Esophagus muscularis mucosa (tissue), 4 donors: ENCODE measurements at regions of chr3 and their contacts with region 1.

Region 1: GRCh38 chr3:185353823-185354614 is 8.9 kb upstream of the MAP3K13 start:
- DNase-seq: no peak
- H3K4me3 ChIP-seq: no peak overlapping the region
- H3K27ac ChIP-seq: no peak overlapping the region
- H3K4me1 ChIP-seq: no peaks in the 10 kb centered on the region
- H3K27me3 ChIP-seq: no peaks in the 10 kb centered on the region
- CTCF ChIP-seq: peak; percentile 49 to 70 (median 65)
- EP300 ChIP-seq: no peak
- POLR2A ChIP-seq: no peak

Region 2: DNA sequence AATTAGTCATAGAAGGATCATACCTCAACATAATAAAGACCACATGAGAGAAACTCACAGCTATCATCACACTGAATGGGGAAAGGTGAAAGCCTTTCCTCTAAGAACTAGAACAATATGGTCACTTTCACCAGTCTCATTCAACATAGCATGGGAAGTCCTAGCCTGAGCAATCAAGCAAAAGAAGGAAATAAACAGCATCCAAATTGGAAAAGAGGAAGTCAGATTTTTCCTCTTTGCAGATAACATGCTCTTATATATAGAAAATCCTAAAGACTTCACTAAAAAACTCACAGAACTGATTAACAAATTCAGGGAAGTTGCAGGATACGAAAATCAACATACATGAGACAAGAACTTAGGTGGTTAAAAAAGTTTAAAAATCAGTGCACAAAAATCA is 33.6 kb after region 1 on chr3:
- intact Hi-C with region 1: no loop called
- DNase-seq: no peak
- H3K4me3 ChIP-seq: no peak overlapping the region
- H3K27ac ChIP-seq: no peak overlapping the region
- H3K4me1 ChIP-seq: no peaks in the 10 kb centered on the region
- H3K27me3 ChIP-seq: no peaks in the 10 kb centered on the region
- CTCF ChIP-seq: no peak
- EP300 ChIP-seq: no peak
- POLR2A ChIP-seq: no peak

Region 3: DNA sequence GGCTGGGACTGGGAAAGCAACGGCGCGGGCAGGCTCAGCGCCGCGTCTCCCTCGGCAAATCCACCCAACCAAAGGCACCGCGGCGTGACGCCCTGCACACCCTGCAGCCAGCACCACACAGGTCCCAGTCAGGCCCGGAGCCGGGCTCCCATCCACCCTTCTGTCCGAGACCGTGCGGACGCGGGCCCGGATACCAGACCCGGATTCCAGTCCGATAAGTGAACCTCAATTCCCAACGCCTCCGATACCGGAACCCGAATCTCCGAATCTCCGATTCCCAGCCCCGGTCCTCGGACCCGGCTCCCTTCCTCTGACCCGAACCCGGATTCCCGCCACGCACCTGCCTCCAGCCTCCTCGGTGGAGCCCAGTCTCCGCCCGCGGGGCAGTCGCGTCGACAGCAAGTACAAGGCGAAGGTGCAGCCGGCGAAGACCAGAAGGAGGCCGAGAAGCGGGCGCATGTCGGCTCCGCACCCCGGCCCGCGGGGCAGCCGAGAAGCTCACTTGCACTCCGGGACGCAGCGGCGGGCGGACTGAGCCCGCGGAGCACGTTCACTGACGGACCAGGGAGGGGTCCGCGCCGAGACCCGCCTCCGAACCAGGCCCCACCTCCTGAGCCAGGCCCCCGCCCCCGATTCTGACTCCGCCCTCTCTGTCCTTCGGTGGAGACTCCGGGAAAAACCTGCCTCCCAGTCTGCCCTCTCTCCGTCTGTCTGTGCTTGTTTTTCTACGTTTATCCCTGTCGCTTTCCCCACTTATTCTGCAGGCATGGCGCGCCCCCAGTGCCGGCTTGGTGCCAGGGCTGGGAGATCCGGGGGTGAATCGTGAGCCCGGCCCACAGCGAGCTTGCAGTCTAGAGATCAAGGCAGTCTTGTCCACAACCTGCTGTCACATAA is 144.7 kb after region 1 on chr3 and contains the start of gene TMEM41A:
- intact Hi-C with region 1: loop called (anchors 10 kb)
- DNase-seq: peak; percentile 98
- H3K4me3 ChIP-seq: peak within 1 kb of the TSS; percentile 78 to 96 (median 82)
- H3K27ac ChIP-seq: peak within 1 kb of the TSS; percentile 82 to 92 (median 88)
- H3K4me1 ChIP-seq: peaks cover 19 to 28% (median 22%) of the 10 kb centered on the region in 4 donors
- H3K27me3 ChIP-seq: peaks cover 0 to 5% (median 0%) of the 10 kb centered on the region in 4 donors
- CTCF ChIP-seq: peak in 1 of 3 experiments; percentile 7
- EP300 ChIP-seq: no peak
- POLR2A ChIP-seq: peak; percentile 53
- total RNA-seq, gene TMEM41A: 7.5 to 9.6 (median 8.3) TPM

Region 4: GRCh38 chr3:185552358-185552877 is 198.4 kb after region 1 on chr3 and contains the start of gene LIPH:
- intact Hi-C with region 1: loop called (anchors 10 kb)
- DNase-seq: no peak
- H3K4me3 ChIP-seq: no peak within 1 kb of the TSS
- H3K27ac ChIP-seq: no peak within 1 kb of the TSS
- H3K4me1 ChIP-seq: peaks cover 0 to 10% (median 7%) of the 10 kb centered on the region in 4 donors
- H3K27me3 ChIP-seq: no peaks in the 10 kb centered on the region
- CTCF ChIP-seq: no peak
- EP300 ChIP-seq: no peak
- POLR2A ChIP-seq: no peak
- total RNA-seq, gene LIPH: 0.06 to 0.34 TPM in 2 of 4 donors, not detected in the others

Region 5: GRCh38 chr3:186013312-186013711 is 659.3 kb after region 1 on chr3:
- intact Hi-C with region 1: no loop called
- DNase-seq: no peak
- H3K4me3 ChIP-seq: no peak overlapping the region
- H3K27ac ChIP-seq: no peak overlapping the region
- H3K4me1 ChIP-seq: no peaks in the 10 kb centered on the region
- H3K27me3 ChIP-seq: no peaks in the 10 kb centered on the region
- CTCF ChIP-seq: no peak
- EP300 ChIP-seq: no peak
- POLR2A ChIP-seq: no peak